Activated naive CD4-positive, alpha-beta T cell treated with anti-CD3 and anti-CD28 coated beads for 36 hours (primary cell): ENCODE measurements at regions of chr2 and their contacts with region 1.

Region 1: GRCh38 chr2:240513549-240514287 is 44.1 kb downstream of the ANKMY1 start:
- DNase-seq: peak; percentile 94
- H3K4me3 Mint-ChIP-seq: no peak overlapping the region
- H3K27ac Mint-ChIP-seq: peak overlapping the region; percentile 84
- H3K4me1 Mint-ChIP-seq: peaks cover 12% of the 10 kb centered on the region
- H3K27me3 Mint-ChIP-seq: no peaks in the 10 kb centered on the region

Region 2: GRCh38 chr2:240579771-240580614 is 66.3 kb after region 1 on chr2:
- CTCF ChIA-PET with region 1: interaction called, 11 read pairs
- intact Hi-C with region 1: loop called (anchors 1 kb)
- DNase-seq: peak; percentile 83
- H3K4me3 Mint-ChIP-seq: no peak overlapping the region
- H3K27ac Mint-ChIP-seq: peak overlapping the region; percentile 84
- H3K4me1 Mint-ChIP-seq: peaks cover 36% of the 10 kb centered on the region
- H3K27me3 Mint-ChIP-seq: no peaks in the 10 kb centered on the region

Region 3: DNA sequence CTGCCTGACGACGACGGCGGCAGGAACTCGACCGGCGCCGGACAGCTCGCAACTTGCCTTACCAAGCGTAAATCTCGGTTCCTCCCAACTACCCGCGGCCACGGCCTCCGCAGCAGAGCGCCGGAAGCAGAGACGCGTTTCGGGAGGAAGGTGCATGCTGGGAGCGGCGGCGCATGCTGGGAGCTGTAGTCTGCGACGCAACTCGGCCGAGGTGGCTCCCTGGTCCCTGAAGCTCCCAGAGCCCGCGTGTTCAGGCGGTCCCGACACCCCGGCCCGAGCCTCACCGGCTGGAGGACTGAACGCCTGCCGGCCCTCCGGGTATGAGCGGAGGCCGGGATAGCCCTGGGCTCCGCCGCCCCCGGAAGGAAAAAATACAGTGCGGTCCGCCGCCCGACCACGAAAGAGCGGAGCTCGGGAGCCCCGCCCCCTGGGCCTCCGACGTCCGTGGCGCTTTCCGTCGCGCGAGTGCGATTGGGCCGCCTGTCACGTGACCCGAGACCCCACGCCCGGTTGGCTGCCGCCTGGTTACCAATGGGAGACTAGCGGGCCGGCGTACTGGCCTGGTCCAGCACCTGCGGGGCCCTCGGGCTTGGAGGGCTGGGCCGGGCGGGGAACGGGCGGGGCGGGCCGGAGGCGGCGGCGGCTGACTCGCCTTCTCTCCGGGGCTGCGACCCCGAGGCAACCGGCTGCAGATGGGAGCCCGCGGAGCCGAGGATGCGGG is 72.6 kb after region 1 on chr2 and contains the start of gene CAPN10:
- CTCF ChIA-PET with region 1: interaction called, 15 read pairs
- intact Hi-C with region 1: loop called (anchors 2 kb)
- DNase-seq: peak; percentile 97
- H3K4me3 Mint-ChIP-seq: peak within 1 kb of the TSS; percentile 92
- H3K27ac Mint-ChIP-seq: peak within 1 kb of the TSS; percentile 86
- H3K4me1 Mint-ChIP-seq: peaks cover 44% of the 10 kb centered on the region
- H3K27me3 Mint-ChIP-seq: no peaks in the 10 kb centered on the region
- total RNA-seq, gene CAPN10: 24.9 to 28.5 TPM

Region 4: GRCh38 chr2:240624950-240625621 is 111.4 kb after region 1 on chr2 and contains the start of gene GPR35:
- CTCF ChIA-PET with region 1: interaction called, 7 read pairs
- intact Hi-C with region 1: loop called (anchors 10 kb)
- DNase-seq: peak; percentile 86
- H3K4me3 Mint-ChIP-seq: peak within 1 kb of the TSS; percentile 42
- H3K27ac Mint-ChIP-seq: peak within 1 kb of the TSS; percentile 47
- H3K4me1 Mint-ChIP-seq: peaks cover 51% of the 10 kb centered on the region
- H3K27me3 Mint-ChIP-seq: no peaks in the 10 kb centered on the region
- total RNA-seq, gene GPR35: 2.5 to 2.6 TPM

Region 5: DNA sequence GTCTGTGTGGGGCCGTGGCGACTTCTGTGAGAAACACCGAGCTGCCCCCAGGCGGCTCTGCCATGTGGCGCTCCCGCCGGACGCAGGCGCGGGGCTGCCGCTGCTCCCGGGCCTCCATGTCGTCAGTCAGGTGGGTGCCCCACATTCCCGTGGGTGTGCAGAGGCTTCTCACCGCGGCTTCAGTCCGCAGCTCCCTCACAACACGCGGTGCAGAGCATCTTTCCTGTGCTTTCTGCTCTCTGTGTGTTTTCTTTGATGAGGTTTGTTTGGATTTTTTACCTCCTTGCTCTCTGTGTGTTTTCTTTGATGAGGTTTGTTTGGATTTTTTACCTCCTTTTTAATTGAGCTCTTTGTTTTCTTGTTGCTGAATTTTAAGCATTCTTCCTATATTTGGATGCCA is 190.9 kb after region 1 on chr2:
- CTCF ChIA-PET with region 1: interaction called, 5 read pairs
- intact Hi-C with region 1: loop called (anchors 5 kb)
- DNase-seq: peak; percentile 33
- H3K4me3 Mint-ChIP-seq: peak overlapping the region; percentile 19
- H3K27ac Mint-ChIP-seq: no peak overlapping the region
- H3K4me1 Mint-ChIP-seq: peaks cover 13% of the 10 kb centered on the region
- H3K27me3 Mint-ChIP-seq: peaks cover 14% of the 10 kb centered on the region

Region 6: GRCh38 chr2:240840435-240841080 is 326.8 kb after region 1 on chr2:
- CTCF ChIA-PET with region 1: interaction called, 7 read pairs
- intact Hi-C with region 1: loop called (anchors 1 kb)
- DNase-seq: peak; percentile 48
- H3K4me3 Mint-ChIP-seq: no peak overlapping the region
- H3K27ac Mint-ChIP-seq: no peak overlapping the region
- H3K4me1 Mint-ChIP-seq: no peaks in the 10 kb centered on the region
- H3K27me3 Mint-ChIP-seq: no peaks in the 10 kb centered on the region